Head of caudate nucleus (tissue), 42 donors: ENCODE measurements at regions of chr5 and their contacts with region 1.

Region 1: DNA sequence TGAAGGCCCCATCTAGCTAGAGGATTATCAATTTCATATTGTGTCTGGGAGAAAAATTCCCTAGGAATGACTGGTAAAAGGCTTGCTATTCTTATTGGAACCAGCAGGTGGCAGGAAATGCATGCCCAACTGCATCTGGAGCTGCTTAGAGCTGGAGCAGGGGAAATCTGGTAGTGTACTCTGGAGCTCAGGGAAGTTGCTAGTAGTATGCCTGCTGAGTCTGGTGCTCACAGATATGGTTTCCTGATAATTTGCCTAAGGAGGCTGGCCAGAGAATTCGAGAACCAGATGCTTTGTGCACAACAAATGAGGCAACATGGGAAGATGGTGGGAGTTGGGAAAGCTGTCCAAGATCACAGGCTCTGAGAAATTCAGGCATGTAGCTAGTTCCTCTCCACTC is 53.7 kb downstream of the G3BP1 start:
- DNase-seq: peak; percentile 7 to 88 (median 70)

Region 2: GRCh38 chr5:151675611-151676313 is 149.7 kb before region 1 on chr5:
- intact Hi-C with region 1: no loop called
- DNase-seq: no peak

Region 3: GRCh38 chr5:151906246-151906645 is 80.8 kb after region 1 on chr5:
- intact Hi-C with region 1: no loop called
- DNase-seq: no peak

Region 4: DNA sequence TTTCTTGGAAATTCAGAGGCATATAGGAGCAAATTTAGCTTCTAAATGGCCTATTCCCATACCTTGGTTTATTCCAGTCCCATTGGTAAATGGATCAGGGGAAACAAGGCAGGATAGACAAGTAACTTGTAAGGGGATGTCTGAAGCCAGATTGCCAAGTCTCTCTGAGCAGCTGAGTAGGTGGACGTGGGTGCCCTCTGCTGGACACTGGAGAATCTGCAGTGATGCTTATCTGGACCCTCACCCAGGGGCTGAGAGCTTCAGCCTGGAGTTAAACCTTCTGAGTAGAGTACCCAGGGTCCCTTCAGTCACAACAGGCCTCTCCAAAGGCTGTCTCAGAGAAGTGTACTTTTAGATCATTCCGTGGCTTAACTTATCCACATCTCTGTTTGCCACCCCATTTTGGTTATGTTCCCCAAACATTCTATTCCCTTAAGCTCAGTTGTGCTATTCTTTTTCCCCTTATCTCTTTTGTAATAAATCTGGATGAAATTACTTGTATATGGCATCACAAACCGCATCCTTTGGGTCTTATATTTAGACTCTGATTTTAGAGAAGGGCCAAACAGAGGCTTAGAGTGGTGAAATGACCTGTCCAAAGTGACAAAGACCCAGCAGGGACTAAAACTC is 317.5 kb after region 1 on chr5:
- intact Hi-C with region 1: loop called (anchors 5 kb)
- DNase-seq: peak; percentile 19 to 87 (median 63)

Region 5: DNA sequence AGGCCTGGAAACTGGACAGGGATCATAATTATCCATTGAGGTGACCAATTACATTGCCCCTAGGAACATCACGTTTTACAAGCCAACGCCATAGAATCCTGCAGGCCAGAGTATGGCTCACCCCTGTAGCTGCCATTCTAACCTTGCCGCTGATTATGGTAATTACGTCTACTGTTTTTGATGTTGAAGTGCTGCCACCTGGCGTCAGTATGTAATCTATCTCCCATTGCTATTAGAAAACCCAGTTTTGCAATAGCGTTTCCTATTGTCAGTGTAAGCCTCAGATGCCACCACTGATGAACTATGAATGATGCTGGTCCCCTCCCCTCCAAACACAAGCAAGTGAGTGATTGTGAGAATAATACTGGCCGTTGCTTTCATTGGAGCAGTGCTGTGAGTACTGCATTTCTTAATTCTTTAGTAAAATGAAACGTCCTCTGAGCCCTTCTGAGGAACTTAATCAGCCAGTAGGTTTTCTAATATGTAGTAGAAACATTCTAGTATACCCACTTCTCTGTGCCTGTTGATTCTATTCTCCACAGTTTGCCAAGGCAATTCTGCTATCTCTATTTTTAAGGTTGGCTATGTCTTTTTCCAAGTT is 680.1 kb after region 1 on chr5:
- intact Hi-C with region 1: loop called (anchors 10 kb)
- DNase-seq: peak in 41 of 42 donors; percentile 16 to 93 (median 74)